Panc1 (cell line): ENCODE measurements at regions of chr17 and their contacts with region 1.

Region 1: DNA sequence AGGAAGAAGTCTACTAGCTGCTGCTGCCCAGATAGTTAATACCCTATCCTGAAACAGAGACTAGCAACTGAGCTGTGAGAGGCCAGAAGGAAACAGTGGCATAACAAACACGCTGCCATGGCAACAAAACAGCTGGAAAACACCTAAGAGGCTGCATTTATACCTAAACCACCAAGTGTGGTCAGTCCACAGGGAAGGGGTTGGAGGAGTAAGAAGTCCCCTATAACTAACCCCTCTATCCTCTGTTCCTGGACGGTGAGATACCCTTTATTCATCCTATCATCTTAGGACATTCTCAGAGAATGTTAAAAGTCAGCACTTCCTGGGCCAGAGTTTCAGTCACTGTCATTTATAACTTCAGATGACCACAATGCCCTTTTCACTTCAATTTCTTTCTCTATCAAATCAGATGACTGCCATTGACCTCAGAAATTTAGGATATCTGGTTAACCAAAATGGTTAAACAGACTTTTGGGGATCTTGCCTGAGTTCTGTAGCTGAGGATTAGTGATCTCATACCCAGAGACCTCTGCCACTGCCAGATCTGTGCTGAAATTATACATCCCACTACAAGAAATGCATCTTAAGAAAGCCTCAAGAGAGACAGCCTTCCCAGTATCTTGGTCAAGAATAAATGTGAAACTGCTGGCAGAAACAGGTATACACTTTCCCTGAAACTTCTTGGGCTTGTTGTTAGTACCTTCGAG is 36.2 kb downstream of the STH start:
- DNase-seq: no peak
- ATAC-seq: no peak
- H3K4me3 ChIP-seq: no peak overlapping the region
- H3K27ac ChIP-seq: no peak overlapping the region
- H3K4me1 ChIP-seq: no peaks in the 10 kb centered on the region
- H3K27me3 ChIP-seq: no peaks in the 10 kb centered on the region
- CTCF ChIP-seq: no peak

Region 2: DNA sequence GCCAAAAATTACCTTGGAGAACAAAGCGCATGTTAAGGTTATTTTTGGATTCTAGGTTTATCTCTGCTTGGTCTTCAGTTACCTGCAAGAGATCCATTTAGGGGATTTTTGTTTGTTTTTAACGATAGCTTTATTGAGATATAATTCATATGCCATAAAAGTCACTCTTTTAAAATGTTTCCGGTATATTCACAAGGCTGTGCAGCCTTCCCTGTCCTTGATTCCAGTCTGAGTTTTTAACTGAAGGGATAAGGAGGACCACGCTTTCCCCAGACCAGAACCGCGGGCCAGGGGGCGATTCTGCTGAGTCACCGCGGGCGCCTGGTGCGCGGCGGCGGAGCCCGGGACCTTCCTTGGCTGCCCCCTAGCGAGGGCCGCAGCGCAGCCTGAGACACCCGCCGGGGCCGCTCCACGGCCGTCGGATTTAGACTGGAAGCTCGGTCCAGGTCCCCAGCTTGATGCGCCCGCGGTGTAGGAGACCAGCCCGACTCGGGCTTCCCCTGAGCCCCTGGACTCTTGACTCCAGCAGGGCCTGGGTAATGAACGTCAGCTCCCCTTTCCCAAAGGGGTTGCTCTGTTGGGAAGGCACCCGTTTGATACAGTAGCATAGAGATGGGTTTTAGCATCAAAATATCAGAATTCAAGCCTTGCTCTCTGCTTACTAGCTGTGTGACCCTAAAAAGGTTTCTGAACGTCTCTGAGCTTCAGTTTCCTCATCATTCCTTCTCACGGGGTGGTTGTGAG is 86.2 kb before region 1 on chr17:
- CTCF ChIA-PET with region 1: interaction called, 10 read pairs
- POLR2A ChIA-PET with region 1: no interaction called
- in situ Hi-C with region 1: no loop called
- intact Hi-C with region 1: no loop called
- DNase-seq: no peak
- ATAC-seq: peak; percentile 97
- H3K4me3 ChIP-seq: peak overlapping the region; percentile 16 to 46
- H3K27ac ChIP-seq: peak overlapping the region; percentile 91
- H3K4me1 ChIP-seq: peaks cover 6% of the 10 kb centered on the region; the same call in 1 of the 2 replicates
- H3K27me3 ChIP-seq: no peaks in the 10 kb centered on the region
- CTCF ChIP-seq: peak; percentile 90